Motor neuron (in vitro differentiated cells): ENCODE measurements at regions of chr9 and their contacts with region 1.

Region 1: GRCh38 chr9:114505187-114506081 is at the start of gene WHRN:
- ATAC-seq: peak; percentile 82 to 91 (median 84)
- H3K4me3 ChIP-seq: peak within 1 kb of the TSS; percentile 52 to 87 (median 57)
- H3K27ac ChIP-seq: peak within 1 kb of the TSS in 1 of 2 donors; percentile 4
- H3K4me1 ChIP-seq: peaks cover 9 to 36% of the 10 kb centered on the region in 2 donors
- total RNA-seq, gene WHRN: 4.2 to 13.5 (median 6.9) TPM

Region 2: DNA sequence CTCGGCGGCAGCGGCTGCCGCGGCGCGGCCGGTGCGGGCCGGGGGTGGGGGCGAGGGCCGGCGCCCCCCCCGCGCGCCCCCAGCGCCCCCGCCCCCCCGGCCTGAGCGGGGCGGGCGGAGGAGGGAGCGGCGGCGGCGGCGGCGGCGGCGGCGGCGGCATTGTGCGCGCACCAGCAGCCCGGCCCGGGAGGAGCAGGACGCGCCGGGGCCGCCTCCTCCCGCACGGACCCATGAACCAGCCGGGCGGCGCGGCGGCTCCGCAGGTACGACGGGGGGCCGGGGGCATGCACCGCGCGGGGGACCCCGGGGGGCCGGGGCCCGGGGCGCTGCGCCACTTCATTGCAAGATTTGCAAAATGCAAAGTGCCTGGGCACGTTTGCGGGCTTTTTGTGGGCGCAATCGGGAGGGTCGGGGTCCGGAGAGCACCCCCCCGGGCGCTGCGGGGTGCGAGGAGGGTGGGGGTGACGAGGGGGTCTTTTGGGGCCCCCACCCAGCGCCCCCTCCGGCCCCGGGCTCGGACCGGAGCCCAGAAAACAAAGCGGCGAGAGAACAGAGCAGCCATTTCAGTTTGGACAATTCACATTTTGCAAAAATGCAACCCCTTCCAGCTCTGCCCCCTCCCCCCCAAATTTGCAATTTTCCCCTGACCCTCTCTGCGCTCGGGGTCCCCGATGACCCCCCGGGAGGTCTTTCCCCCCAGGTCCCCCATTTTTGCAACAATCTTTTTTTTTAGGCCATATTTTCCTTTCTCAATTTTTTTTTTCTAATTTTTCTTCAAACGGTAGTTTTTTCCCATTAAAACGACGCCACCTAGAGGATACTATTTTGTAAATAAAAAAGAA is 629.1 kb before region 1 on chr9 and contains the start of gene ZNF618:
- in situ Hi-C with region 1: no loop called
- ATAC-seq: peak; percentile 83 to 91 (median 89)
- H3K4me3 ChIP-seq: peak within 1 kb of the TSS; percentile 90 to 100 (median 98)
- H3K27ac ChIP-seq: peak within 1 kb of the TSS; percentile 86 to 89
- H3K4me1 ChIP-seq: peaks cover 16 to 23% of the 10 kb centered on the region in 2 donors
- total RNA-seq, gene ZNF618: 3.4 to 41.6 (median 20.4) TPM

Region 3: GRCh38 chr9:114592356-114592755 is 86.9 kb after region 1 on chr9:
- in situ Hi-C with region 1: loop called in 1 of 9 experiments (anchors 5 kb)
- ATAC-seq: no peak
- H3K4me3 ChIP-seq: no peak overlapping the region
- H3K27ac ChIP-seq: no peak overlapping the region
- H3K4me1 ChIP-seq: peaks cover 9 to 11% of the 10 kb centered on the region in 2 donors

Region 4: GRCh38 chr9:115799734-115800133 is 1294.3 kb after region 1 on chr9:
- in situ Hi-C with region 1: no loop called
- ATAC-seq: peak in 7 of 8 experiments; percentile 14 to 70 (median 55)
- H3K4me3 ChIP-seq: no peak overlapping the region
- H3K27ac ChIP-seq: no peak overlapping the region
- H3K4me1 ChIP-seq: no peaks in the 10 kb centered on the region